ENCODE measurements at regions of chrX and their contacts with region 1.

Region 1: DNA sequence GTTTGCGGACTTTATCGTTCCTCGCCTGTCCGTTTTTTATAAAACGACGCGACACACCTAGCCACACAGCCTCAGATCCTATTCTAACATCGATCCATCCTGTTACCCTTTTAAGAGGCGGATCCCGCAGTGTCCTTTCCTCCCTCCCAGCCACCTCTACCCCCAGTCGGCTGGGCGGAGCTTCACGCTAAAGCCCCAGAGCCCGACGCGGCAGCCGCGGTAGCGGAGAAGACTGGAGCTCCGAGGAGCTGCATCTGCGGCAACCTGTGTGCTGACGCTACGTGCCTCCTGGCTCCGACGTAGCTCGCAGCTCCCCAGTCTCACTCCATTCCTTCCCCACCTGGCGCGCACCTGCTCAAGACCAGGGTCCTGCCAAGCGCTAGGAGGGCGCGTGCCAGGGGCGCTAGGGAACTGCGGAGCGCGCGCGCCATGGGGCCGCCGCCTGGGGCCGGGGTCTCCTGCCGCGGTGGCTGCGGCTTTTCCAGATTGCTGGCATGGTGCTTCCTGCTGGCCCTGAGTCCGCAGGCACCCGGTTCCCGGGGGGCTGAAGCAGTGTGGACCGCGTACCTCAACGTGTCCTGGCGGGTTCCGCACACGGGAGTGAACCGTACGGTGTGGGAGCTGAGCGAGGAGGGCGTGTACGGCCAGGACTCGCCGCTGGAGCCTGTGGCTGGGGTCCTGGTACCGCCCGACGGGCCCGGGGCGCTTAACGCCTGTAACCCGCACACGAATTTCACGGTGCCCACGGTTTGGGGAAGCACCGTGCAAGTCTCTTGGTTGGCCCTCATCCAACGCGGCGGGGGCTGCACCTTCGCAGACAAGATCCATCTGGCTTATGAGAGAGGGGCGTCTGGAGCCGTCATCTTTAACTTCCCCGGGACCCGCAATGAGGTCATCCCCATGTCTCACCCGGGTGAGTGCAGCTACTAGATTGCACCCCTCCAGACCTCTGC is at the start of gene RNF128:
- DNase-seq: no peak
- H3K4me3 Mint-ChIP-seq: peak within 1 kb of the TSS; percentile 60
- H3K27ac Mint-ChIP-seq: no peak within 1 kb of the TSS
- H3K4me1 Mint-ChIP-seq: peaks cover 9% of the 10 kb centered on the region
- H3K27me3 Mint-ChIP-seq: peaks cover 19% of the 10 kb centered on the region
- total RNA-seq, gene RNF128: not detected in 2 replicates

Region 2: DNA sequence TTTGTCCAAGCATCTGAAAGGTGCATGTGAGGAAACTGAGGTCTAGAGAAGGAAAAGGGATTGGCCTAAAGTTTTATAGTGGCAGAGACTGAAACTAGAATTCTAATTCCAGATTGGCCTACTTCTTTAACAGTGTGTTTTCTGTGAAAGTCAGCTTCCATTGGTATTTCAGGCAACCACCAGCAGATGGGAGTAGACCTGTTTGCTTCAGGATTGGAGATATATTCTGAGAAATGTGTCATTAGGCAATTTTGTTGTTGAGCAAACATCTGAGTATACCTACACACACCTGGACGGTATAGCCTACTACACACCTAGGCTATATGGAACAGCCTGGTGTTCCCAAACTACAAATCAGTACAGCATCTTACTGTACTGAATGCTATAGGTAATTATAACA is 322.2 kb before region 1 on chrX:
- intact Hi-C with region 1: no loop called
- DNase-seq: no peak
- H3K4me3 Mint-ChIP-seq: no peak overlapping the region
- H3K27ac Mint-ChIP-seq: no peak overlapping the region
- H3K4me1 Mint-ChIP-seq: no peaks in the 10 kb centered on the region
- H3K27me3 Mint-ChIP-seq: peaks cover under 1% of the 10 kb centered on the region

Region 3: DNA sequence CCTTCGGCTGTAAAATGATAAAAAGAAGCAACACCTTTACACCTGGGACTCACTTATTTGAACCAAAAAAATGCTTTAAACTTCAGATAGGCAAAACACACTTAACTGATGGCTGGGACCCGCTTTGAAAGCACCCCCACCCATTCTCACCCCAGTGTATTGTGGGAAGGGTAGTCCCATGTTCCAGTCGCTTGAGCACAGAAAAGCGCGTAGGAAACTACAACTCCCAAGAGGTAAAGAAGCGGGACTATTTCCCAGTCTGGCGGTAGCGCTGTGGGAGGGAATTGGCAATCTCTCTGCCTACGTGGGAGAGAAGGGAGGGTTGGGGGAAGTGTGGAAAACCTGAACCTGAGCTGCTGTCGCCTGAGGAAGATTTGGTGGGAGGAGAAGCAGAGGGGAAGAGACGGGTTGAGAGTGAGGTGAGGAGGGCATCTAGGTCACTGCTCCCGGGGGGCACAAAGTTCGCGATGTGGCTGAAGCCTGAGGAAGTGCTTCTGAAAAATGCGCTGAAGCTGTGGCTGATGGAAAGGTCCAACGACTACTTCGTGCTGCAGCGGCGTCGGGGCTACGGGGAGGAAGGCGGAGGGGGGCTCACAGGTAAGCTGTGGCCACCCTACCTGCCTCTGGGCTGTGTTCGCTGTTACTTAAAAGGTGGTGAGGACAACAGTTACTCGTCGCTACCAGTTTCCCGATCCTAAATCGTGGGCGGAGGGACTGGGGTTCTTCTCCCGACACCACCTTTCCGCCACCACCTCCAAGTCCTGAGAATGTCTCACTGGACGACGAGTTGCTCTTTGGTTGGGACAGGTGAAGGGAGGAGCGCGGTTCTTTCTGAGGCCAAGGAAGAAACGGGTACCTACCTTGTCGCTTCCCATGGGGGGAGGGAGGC is 75.9 kb after region 1 on chrX and contains the start of gene TBC1D8B:
- intact Hi-C with region 1: loop called (anchors 5 kb)
- DNase-seq: peak; percentile 0
- H3K4me3 Mint-ChIP-seq: peak within 1 kb of the TSS; percentile 88
- H3K27ac Mint-ChIP-seq: no peak within 1 kb of the TSS
- H3K4me1 Mint-ChIP-seq: peaks cover 13% of the 10 kb centered on the region
- H3K27me3 Mint-ChIP-seq: peaks cover 32% of the 10 kb centered on the region
- total RNA-seq, gene TBC1D8B: 0.26 and 0.32 TPM in 2 replicates